Caco-2 (cell line): ENCODE measurements at regions of chr3 and their contacts with region 1.

Region 1: DNA sequence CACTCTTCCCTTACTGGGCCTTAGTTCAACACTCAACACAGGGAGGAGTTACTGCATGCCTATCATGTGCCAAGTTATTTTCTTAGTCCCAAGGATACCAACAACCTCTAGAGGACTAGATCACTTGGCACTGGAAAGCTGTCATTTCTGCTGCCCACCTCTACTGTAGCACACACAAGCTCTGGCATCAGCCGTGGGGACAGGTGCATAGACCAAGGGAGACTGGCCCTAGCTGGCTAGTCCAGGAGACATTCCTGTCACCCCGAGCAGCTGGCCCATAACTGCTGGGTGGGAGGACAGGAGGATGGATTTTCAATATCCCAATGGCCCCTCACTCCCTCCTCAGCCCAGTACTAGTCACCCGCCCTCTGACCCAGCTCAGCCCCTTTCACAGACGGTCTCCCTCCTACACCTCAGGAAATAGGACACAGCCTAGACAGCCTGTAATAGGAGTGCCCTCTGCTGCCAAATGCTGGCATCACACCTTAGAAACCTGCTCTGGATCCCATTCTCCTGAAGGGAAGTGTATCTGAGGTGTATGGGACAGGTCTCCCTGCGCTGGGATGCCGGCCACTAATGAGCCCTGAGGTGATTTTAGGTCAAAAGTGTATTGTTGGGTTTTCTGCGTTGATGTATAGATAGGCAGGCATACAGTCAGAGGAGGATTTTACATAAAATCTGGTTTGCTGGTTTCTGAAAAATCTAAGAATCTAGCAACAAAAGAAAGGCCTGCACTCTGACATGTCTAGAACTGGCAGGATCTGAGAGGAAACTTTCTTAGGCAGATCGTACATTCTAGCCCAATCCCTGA is 3.4 kb upstream of the DZIP1L start:
- DNase-seq: peak; percentile 77 to 82
- H3K4me3 ChIP-seq: no peak overlapping the region
- H3K4me3 Mint-ChIP-seq: no peak overlapping the region
- H3K27ac Mint-ChIP-seq: no peak overlapping the region
- H3K4me1 ChIP-seq: peaks cover 5% of the 10 kb centered on the region
- H3K4me1 Mint-ChIP-seq: no peaks in the 10 kb centered on the region
- H3K27me3 ChIP-seq: no peaks in the 10 kb centered on the region
- H3K27me3 Mint-ChIP-seq: no peaks in the 10 kb centered on the region
- CTCF ChIP-seq: peak; percentile 78 to 85

Region 2: DNA sequence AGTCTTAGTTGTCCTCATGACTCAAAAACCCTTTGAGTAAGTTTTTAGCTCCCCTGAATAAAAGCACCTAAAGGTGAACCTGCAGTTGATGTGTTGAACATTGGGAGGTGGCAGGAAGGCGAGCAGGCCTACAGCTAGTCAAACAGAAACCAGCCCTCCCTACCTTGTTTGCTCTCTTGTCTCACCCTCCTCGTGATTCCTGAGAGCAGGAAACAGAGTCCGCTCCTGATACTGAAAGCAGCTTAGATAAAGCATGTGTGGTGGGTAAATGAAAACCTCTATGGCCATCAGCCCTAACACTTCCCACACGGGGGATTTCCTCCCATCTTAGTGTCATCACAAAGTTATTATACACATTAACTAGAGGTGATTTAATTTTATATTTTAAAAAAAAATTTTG is 130.7 kb before region 1 on chr3:
- CTCF ChIA-PET with region 1: no interaction called
- POLR2A ChIA-PET with region 1: no interaction called
- intact Hi-C with region 1: no loop called
- DNase-seq: peak; percentile 35 to 50
- H3K4me3 ChIP-seq: no peak overlapping the region
- H3K4me3 Mint-ChIP-seq: no peak overlapping the region
- H3K27ac Mint-ChIP-seq: peak overlapping the region; percentile 42
- H3K4me1 ChIP-seq: peaks cover 17% of the 10 kb centered on the region
- H3K4me1 Mint-ChIP-seq: peaks cover 14% of the 10 kb centered on the region
- H3K27me3 ChIP-seq: no peaks in the 10 kb centered on the region
- H3K27me3 Mint-ChIP-seq: no peaks in the 10 kb centered on the region
- CTCF ChIP-seq: no peak

Region 3: DNA sequence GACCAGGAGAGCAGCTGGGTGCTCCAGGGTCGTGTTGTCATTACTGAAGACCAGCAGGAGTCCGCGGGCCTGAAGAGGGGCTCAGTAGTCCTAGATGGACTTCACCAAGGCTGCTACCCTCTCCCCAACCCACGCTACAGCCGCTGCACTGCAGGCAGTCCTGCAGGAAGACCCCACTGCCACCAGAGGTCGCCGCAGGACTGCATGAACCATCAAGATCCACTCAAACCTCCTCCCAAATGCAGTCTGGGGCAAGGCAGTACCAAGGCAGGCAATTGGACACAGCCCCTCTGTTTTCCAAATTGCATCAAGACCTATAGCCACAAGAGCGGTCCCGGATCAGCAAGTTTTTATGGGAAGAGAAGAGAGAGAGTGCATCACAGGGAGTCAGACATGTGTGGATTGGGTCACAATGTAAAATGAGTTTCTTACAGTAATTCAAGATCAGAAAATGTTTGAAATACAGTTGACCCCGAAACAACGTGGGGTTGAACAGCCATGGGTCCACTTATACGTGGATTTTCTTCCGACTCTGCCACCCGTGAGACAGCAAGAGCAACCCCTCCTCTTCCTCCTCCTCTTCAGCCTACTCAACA is 50.1 kb before region 1 on chr3:
- CTCF ChIA-PET with region 1: interaction called, 14 read pairs
- POLR2A ChIA-PET with region 1: no interaction called
- intact Hi-C with region 1: loop called (anchors 1 kb)
- DNase-seq: peak; percentile 75 to 82
- H3K4me3 ChIP-seq: no peak overlapping the region
- H3K4me3 Mint-ChIP-seq: no peak overlapping the region
- H3K27ac Mint-ChIP-seq: no peak overlapping the region
- H3K4me1 ChIP-seq: no peaks in the 10 kb centered on the region
- H3K4me1 Mint-ChIP-seq: no peaks in the 10 kb centered on the region
- H3K27me3 ChIP-seq: no peaks in the 10 kb centered on the region
- H3K27me3 Mint-ChIP-seq: no peaks in the 10 kb centered on the region
- CTCF ChIP-seq: peak; percentile 96 to 97

Region 4: GRCh38 chr3:138082085-138082991 is 36.5 kb before region 1 on chr3:
- CTCF ChIA-PET with region 1: no interaction called
- POLR2A ChIA-PET with region 1: no interaction called
- intact Hi-C with region 1: loop called (anchors 5 kb)
- DNase-seq: peak in 1 of 2 experiments; percentile 45
- H3K4me3 ChIP-seq: no peak overlapping the region
- H3K4me3 Mint-ChIP-seq: peak overlapping the region; percentile 13
- H3K27ac Mint-ChIP-seq: peak overlapping the region; percentile 45
- H3K4me1 ChIP-seq: peaks cover 12% of the 10 kb centered on the region; the same call in 1 of the 2 replicates
- H3K4me1 Mint-ChIP-seq: peaks cover 15% of the 10 kb centered on the region
- H3K27me3 ChIP-seq: no peaks in the 10 kb centered on the region
- H3K27me3 Mint-ChIP-seq: no peaks in the 10 kb centered on the region
- CTCF ChIP-seq: no peak